ENCODE measurements at regions of chr5 and their contacts with region 1.

Region 1: DNA sequence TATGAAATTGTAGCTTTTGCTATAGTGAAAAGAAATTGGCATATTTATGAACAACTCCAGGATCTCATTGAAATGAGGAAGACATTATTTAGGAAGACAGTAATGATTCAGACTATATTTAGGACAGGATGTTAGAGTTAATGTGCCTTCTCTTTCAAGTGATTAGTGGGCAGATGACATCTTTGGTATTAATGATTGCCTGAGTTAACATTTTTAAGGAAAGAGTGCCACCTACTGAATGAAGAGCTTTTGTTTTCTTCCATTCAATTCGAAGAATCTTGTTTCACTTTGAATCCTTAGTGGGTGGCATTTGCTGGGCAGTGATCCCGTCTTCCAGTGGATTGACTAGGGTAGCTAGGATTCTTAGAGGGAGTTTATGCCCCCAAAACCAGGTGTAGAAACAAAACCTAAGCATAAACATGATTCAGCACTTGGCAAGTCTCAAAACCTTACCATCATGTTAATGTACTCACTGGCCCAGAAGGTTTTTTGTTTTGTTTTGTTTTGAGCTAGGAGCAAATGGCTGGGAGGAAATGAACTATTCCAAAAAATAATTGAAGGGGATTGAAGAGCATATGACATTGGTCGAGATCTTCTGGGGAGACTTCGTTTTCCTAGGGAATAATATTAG is 23.2 kb downstream of the MAP3K1 start:
- DNase-seq: peak; percentile 70
- H3K4me3 ChIP-seq: peak overlapping the region; percentile 28
- H3K27ac ChIP-seq: peak overlapping the region; percentile 3
- H3K4me1 ChIP-seq: peaks cover 42% of the 10 kb centered on the region
- CTCF ChIP-seq: peak; percentile 87

Region 2: DNA sequence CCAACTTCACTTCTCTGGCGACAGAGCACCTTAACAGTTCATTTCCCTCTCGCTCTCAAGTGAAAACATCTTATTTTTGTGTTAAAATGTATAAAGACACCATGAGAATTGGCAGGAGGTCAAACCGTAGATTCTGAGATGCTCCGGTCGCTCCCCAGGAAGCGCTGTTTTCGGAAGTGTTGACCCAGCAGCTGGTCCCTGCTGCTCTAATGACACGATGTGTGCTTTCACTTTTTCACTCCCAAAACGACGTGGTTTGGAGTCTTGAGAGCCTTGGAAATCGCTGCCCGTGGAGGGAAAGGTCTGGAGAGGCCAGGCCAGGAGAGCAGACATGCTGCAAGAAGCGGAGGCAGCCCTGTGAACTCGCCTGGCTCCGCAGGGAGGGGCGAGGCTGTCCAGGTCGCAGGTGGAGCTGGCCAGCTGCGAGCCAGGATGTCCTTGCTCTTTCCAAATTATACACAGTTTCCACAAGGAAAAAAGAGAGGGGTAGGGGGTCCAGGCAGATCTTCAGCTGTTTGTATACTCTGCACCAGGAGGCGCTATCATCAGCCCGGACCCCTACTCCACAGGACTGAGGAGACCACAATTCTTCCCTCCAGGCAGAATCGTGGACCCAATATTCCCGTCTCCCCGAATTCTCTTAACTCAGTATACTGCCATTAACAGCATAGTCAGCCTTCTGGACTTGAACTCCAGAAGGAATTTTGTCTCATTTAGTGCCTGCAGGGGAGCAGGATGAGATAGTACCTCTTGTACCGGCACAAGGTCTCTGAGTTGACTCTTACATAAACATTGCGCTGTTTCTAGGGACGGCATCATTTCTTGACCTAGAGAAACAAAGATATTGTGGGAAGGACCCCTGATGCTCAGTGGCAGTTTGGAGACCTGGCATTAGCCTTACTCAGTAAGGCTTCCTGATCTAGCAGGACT is 356.8 kb before region 1 on chr5:
- CTCF ChIA-PET with region 1: interaction called, 3 read pairs
- POLR2A ChIA-PET with region 1: interaction called, 5 read pairs
- intact Hi-C with region 1: loop called (anchors 2 kb)
- DNase-seq: peak; percentile 56
- H3K4me3 ChIP-seq: peak overlapping the region; percentile 65
- H3K27ac ChIP-seq: peak overlapping the region; percentile 60
- H3K4me1 ChIP-seq: peaks cover 40% of the 10 kb centered on the region
- CTCF ChIP-seq: peak; percentile 81

Region 3: GRCh38 chr5:56827049-56827448 is 11.5 kb before region 1 on chr5:
- CTCF ChIA-PET with region 1: no interaction called
- POLR2A ChIA-PET with region 1: interaction called, 21 read pairs
- intact Hi-C with region 1: no loop called
- DNase-seq: peak; percentile 43
- H3K4me3 ChIP-seq: no peak overlapping the region
- H3K27ac ChIP-seq: no peak overlapping the region
- H3K4me1 ChIP-seq: peaks cover 70% of the 10 kb centered on the region
- CTCF ChIP-seq: peak; percentile 70

Region 4: DNA sequence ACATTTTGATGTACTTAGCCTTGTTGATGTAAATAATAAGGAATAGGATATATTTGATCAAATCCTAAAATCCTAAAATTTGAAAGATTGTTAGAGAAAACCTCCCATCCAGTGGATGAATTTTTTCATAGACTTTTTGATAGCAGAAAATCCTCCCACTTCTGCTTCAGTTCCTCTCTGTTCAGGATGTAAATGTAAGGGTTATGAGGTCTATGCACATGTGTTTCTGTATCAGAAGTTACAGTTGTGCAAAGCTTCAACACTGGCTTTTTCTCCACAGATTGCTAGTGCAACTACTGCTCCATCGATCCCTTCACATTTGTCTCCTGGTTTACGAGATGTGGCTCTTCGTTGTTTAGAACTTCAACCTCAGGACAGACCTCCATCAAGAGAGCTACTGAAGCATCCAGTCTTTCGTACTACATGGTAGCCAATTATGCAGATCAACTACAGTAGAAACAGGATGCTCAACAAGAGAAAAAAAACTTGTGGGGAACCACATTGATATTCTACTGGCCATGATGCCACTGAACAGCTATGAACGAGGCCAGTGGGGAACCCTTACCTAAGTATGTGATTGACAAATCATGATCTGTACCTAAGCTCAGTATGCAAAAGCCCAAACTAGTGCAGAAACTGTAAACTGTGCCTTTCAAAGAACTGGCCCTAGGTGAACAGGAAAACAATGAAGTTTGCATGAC is 54.9 kb after region 1 on chr5:
- CTCF ChIA-PET with region 1: no interaction called
- POLR2A ChIA-PET with region 1: no interaction called
- intact Hi-C with region 1: no loop called
- DNase-seq: no peak
- H3K4me3 ChIP-seq: no peak overlapping the region
- H3K27ac ChIP-seq: no peak overlapping the region
- H3K4me1 ChIP-seq: no peaks in the 10 kb centered on the region
- CTCF ChIP-seq: no peak

Region 5: DNA sequence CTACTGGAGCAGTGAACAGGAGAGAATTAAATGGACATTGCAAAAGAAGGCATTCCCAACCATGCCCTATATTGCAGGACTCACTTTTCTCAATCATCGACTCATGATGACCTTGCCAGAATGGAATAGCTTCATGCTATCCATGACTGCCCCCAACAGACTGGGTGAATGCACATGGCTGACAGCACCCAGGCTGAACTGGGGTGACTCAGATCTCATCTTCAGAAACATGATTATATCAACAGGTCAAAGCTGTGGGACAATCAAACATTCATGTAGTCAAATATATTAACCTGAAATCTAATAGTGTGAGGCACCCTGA is 148.1 kb after region 1 on chr5:
- CTCF ChIA-PET with region 1: no interaction called
- POLR2A ChIA-PET with region 1: no interaction called
- intact Hi-C with region 1: no loop called
- DNase-seq: no peak
- H3K4me3 ChIP-seq: no peak overlapping the region
- H3K27ac ChIP-seq: no peak overlapping the region
- H3K4me1 ChIP-seq: peaks cover 19% of the 10 kb centered on the region
- CTCF ChIP-seq: no peak

Measured in OCI-LY7 (cell line).